Gastrocnemius medialis (tissue), 4 donors: ENCODE measurements at regions of chr17 and their contacts with region 1.

Region 1: DNA sequence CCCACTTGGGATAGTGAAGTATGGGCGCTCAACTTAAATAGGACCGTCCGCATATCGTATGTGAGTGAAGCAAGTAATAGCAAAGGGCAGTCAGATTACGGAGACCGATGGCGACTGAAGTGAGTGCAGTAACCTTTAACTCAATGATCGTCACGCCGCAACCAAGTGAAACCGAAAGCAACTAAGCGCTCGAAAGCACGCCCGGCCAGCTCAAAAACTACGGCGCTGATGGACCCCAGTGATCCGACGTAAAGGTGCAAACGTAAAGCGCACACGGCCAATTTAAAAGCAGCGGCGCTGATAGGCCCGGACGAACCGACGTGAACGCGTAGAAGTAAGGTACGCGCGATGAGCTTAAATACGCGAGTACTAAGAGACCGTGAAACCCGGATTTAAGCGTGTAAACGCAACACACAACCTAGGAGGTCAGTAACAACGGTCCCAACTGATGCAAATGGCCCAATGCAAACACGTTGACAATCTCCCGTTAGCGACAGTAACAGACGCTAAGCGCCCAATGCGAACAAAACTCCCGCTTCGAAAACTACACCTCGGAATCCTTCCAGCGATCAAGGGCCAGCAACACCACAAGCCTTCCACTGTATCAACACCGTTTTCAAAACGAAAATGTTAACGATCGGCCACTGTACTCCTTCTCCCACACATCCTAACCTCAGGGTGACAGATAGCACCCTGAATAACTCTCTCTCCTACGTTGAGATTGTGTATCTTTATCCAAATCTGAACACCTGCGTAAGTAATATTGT is 37.9 kb upstream of the ARL4D start:
- DNase-seq: peak; percentile 90 to 97
- ATAC-seq: peak; percentile 83 to 87
- H3K4me3 ChIP-seq: peak overlapping the region; percentile 62 to 74 (median 68)
- H3K27ac ChIP-seq: peak overlapping the region; percentile 84 to 97 (median 92)
- H3K4me1 ChIP-seq: peaks cover 26 to 40% of the 10 kb centered on the region in 2 donors
- H3K27me3 ChIP-seq: no peaks in the 10 kb centered on the region
- CTCF ChIP-seq: no peak
- POLR2A ChIP-seq: peak; percentile 92 to 99

Region 2: GRCh38 chr17:43324205-43324893 is 36.6 kb before region 1 on chr17:
- in situ Hi-C with region 1: no loop called
- intact Hi-C with region 1: no loop called
- DNase-seq: no peak
- ATAC-seq: no peak
- H3K4me3 ChIP-seq: no peak overlapping the region
- H3K27ac ChIP-seq: no peak overlapping the region
- H3K4me1 ChIP-seq: peaks cover 9 to 10% of the 10 kb centered on the region in 2 donors
- H3K27me3 ChIP-seq: no peaks in the 10 kb centered on the region
- CTCF ChIP-seq: peak in 1 of 5 experiments; percentile 13
- POLR2A ChIP-seq: no peak

Region 3: DNA sequence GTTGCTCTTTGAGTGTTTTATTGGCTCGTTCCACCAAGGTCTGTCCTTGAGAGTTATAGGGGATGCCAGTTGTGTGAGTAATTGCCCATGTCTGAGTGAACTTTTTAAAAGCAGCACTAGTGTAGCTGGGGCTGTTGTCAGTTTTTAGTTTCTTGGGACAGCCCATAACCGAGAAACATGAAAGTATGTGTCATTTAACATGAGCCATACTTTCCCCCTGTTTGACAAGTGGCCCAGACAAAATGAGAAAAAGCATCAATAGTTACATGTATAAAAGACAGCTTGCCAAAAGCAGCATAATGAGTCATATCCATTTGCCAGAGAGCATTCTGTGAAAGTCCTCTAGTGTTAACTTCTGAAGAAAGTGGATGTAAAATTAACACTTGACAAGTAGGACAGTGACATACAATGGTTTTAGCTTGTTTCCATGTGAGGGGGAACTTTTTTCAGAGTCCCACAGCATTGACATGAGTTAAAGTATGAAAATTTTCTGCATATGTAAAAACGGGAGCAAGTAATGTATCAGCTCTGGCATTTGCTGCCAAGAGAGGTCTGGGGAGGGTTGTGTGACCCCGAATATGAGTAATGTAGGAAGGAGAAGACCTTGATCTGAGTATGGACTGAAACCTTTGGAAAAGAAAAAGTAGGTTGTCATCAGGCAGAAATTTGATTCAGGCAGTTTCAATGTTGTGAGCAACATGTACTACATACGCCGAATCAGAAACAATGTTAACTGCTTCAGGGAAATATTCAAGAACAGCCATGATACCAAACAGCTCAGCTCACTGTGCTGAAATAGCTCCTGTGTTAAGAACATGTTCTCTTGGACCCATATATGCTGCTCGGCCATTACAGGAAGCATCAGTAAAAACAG is 19.0 kb before region 1 on chr17:
- in situ Hi-C with region 1: no loop called
- intact Hi-C with region 1: loop called (anchors 2 kb)
- DNase-seq: no peak
- ATAC-seq: peak in 1 of 2 donors; percentile 49
- H3K4me3 ChIP-seq: no peak overlapping the region
- H3K27ac ChIP-seq: peak overlapping the region in 3 of 4 donors; percentile 6 to 17 (median 7)
- H3K4me1 ChIP-seq: peaks cover 13 to 17% of the 10 kb centered on the region in 2 donors
- H3K27me3 ChIP-seq: no peaks in the 10 kb centered on the region
- CTCF ChIP-seq: no peak
- POLR2A ChIP-seq: no peak

Region 4: DNA sequence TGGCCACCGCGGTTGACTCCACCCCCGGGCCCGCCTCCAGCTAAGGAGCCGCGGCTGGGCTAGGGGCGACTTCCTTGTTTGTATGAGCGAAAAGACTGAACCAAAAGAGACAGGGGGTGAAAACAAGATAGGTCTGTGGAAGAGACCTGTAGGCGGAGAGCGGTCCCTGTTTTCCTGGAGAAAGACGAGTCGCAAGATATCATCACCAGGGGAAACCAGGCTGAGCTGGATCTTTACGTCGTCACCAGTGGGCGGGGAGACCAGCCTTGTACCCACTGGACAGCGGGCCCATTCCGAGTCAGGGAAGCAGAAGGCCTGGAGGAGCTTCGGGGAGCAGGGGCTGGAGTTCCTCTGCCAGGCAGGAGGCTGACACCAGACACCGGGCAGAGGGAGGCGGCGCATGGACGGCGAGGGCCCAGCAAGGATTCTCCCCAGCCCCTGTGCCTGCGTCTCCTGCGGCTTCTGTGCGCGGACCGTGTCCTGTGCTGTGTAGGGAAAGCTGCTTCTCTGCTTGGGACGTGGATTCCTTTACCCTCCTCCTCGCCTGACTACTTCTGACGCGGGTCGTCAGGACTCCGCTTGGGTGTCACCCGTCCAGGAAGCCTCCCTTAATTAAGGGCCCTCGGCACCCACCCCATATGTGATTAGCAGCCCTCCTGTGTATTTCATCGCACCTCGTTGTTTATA is 27.6 kb after region 1 on chr17:
- in situ Hi-C with region 1: no loop called
- intact Hi-C with region 1: loop called (anchors 2 kb)
- DNase-seq: peak; percentile 93 to 94
- ATAC-seq: peak; percentile 90 to 93
- H3K4me3 ChIP-seq: peak overlapping the region; percentile 64 to 88 (median 70)
- H3K27ac ChIP-seq: peak overlapping the region; percentile 93 to 100 (median 98)
- H3K4me1 ChIP-seq: peaks cover 0 to 6% of the 10 kb centered on the region in 2 donors
- H3K27me3 ChIP-seq: no peaks in the 10 kb centered on the region
- CTCF ChIP-seq: no peak
- POLR2A ChIP-seq: peak; percentile 92 to 97

Region 5: GRCh38 chr17:43431714-43432523 is 71.0 kb after region 1 on chr17:
- in situ Hi-C with region 1: no loop called
- intact Hi-C with region 1: no loop called
- DNase-seq: no peak
- ATAC-seq: peak; percentile 69 to 70
- H3K4me3 ChIP-seq: no peak overlapping the region
- H3K27ac ChIP-seq: peak overlapping the region in 1 of 4 donors; percentile 34
- H3K4me1 ChIP-seq: no peaks in the 10 kb centered on the region
- H3K27me3 ChIP-seq: peaks cover 0 to 5% (median 5%) of the 10 kb centered on the region in 3 donors
- CTCF ChIP-seq: no peak
- POLR2A ChIP-seq: no peak

Region 6: GRCh38 chr17:43442711-43443110 is 81.8 kb after region 1 on chr17:
- in situ Hi-C with region 1: no loop called
- intact Hi-C with region 1: no loop called
- DNase-seq: no peak
- ATAC-seq: no peak
- H3K4me3 ChIP-seq: no peak overlapping the region
- H3K27ac ChIP-seq: no peak overlapping the region
- H3K4me1 ChIP-seq: no peaks in the 10 kb centered on the region
- H3K27me3 ChIP-seq: no peaks in the 10 kb centered on the region
- CTCF ChIP-seq: no peak
- POLR2A ChIP-seq: no peak

Region 7: DNA sequence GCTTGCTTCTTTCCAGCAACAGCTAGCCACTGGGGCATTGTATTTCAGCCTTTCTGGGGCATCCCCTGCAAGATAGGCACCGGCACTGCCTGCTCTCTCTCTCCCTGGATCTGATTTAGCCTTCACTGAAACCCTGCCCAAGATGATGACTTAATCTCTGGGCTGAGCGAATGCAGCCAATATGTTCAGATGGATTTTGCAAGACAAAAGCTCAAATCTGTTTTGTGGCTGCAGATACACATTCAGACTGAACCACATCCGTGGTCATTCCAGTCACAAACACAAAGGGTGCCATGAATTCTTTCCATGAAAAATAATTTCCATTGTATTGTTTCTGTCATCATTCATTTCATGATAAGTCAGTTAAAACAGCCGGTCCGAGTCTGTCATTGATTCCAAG is 373.5 kb after region 1 on chr17:
- in situ Hi-C with region 1: no loop called
- intact Hi-C with region 1: no loop called
- DNase-seq: no peak
- ATAC-seq: no peak
- H3K4me3 ChIP-seq: no peak overlapping the region
- H3K27ac ChIP-seq: no peak overlapping the region
- H3K4me1 ChIP-seq: no peaks in the 10 kb centered on the region
- H3K27me3 ChIP-seq: no peaks in the 10 kb centered on the region
- CTCF ChIP-seq: no peak
- POLR2A ChIP-seq: no peak